ENCODE measurements at regions of chr4 and their contacts with region 1.

Region 1: DNA sequence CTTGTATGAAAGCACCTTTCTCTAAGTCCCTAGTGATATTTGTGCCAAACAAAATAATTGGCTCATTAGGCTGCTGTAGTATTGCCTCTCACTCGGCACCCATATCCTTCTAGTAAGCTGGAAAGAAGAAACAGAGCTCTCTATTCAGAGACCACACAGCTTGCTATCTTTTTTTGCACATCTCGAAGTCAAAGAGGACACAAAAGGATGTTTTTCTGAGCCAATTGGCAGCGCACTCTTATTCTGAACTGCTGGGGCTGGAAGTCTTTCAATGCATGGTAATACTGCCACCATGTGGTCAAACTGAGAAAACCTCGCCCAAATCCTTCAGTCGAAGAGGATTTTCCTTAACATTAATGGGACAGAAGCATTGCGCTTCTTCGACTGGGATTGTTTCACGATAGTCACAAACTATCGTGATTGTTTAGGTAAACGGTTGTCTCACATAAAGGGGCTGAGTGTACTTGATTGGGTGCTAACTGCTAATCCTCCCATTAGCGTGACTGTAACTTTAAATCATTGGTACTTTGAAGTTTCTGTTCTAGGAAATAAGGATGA is 572.0 kb upstream of the LCORL start:
- DNase-seq: no peak
- ATAC-seq: peak; percentile 82
- H3K4me3 ChIP-seq: no peak overlapping the region
- H3K27ac ChIP-seq: no peak overlapping the region
- H3K4me1 ChIP-seq: no peaks in the 10 kb centered on the region
- H3K27me3 ChIP-seq: no peaks in the 10 kb centered on the region
- CTCF ChIP-seq: peak; percentile 82

Region 2: GRCh38 chr4:17810260-17811077 is 783.1 kb before region 1 on chr4 and contains the starts of genes DCAF16 and NCAPG:
- intact Hi-C with region 1: loop called (anchors 10 kb)
- DNase-seq: peak; percentile 100
- ATAC-seq: peak; percentile 100
- H3K4me3 ChIP-seq: peak within 1 kb of the TSS; percentile 79
- H3K27ac ChIP-seq: peak within 1 kb of the TSS; percentile 94
- H3K4me1 ChIP-seq: peaks cover 43% of the 10 kb centered on the region
- H3K27me3 ChIP-seq: no peaks in the 10 kb centered on the region
- CTCF ChIP-seq: no peak
- total RNA-seq, gene DCAF16: 26.2 TPM
- total RNA-seq, gene NCAPG: 0.84 TPM